ENCODE measurements at regions of chr16 and their contacts with region 1.

Region 1: DNA sequence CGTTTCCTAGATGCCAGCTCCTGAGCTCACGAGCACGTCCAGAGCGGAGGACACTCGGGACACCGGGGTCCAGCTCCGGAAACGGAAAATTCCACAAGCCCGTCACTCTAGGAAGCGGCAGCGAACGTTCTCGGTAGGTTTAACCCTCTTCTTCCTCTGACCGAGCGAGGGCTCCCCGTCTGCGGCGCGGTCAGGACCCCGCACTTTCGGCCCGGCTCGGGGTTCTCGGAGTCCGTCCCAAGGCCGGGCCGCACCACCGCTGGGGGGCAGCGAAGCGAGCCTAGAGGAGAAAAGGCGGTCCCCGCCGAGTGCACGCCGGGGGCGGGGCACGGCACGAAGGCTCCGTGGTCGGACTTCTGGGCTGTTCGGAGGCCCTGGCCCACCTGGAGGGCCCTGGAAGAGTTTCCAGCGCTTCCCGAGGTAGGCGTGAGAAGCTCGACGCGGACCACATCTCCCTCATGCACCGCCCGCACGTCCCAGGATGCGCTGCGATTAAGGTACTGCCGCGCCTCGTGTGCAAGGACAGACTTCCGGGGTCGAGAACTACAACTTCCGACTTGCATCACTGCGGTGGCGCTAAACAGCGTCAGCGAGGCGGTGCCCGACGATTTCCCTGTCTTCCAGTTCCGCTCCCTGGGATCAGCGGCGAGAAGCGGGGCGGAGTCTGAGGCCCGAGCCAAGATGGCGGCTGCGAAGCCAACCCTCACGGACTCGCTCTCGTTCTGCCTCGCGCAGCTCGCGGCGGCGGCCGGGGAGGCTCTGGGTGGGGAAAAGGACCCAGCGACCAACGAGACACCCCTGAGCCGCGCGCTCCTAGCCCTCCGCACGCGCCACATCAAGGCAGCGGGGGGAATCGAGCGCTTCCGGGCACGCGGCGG is at the start of gene ARMC5:
- DNase-seq: peak; percentile 96 to 99 (median 98)

Region 2: DNA sequence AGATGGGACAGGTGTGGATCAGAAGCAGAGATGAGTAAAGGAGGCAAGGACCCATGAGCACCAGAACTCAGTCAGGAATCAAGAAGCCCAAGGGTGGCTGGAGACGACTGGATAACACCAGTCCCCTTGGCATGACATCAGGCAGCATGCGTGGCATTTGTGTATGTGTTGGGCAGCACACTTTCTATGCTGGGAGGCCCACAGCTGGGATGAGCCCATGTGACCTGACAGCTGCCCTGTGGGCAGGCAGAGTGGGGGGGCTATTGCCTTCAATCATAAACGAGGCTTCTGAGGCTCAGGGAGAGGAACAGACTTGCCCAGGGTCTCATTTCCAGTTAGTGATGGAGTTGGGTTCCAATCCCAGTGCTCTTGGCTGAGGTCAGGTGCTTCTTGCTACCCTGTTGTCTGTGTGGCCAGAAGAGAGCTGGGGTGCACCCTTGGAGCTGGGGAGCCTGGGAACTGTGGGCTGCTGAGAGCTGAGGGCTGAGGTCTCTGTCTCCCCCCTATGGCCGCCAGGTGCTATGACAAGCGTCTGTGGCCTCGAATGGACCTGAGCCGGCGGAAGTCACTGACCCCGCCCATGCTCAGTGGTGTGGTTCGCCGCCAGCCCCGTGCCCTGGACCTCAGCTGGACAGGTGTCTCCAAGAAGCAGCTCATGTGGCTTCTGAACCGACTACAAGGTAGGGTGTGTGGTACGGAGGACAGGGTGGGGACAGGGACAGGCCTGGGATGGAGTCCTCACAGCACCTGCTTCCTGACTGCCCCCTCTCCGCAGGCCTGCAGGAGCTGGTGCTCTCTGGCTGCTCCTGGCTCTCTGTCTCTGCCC is 517.3 kb before region 1 on chr16:
- intact Hi-C with region 1: no loop called
- DNase-seq: peak in 41 of 42 donors; percentile 34 to 80 (median 65)

Region 3: DNA sequence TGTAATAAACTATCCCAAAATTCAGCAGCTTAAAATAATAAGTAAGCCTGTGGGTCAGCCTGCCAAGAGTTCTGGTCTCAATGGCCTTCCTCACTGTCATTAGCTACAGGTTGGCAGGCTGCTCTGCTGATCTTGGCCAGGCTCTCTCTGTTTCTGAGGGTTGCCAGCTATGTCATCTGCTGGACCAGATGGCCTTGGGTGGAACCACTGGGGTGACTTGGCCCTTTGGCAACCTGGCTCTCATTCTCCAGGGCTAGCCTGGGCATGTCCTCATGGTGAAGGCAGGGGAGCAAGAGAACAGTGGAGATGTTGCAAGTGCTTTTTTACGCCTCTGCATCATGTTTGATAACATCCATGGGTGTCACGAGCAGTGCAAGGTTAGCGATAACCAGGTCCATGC is 185.4 kb before region 1 on chr16:
- intact Hi-C with region 1: no loop called
- DNase-seq: no peak

Region 4: GRCh38 chr16:31507929-31508705 is 49.0 kb after region 1 on chr16 and contains the start of gene RUSF1:
- intact Hi-C with region 1: loop called (anchors 5 kb)
- DNase-seq: peak; percentile 81 to 97 (median 94)

Region 5: DNA sequence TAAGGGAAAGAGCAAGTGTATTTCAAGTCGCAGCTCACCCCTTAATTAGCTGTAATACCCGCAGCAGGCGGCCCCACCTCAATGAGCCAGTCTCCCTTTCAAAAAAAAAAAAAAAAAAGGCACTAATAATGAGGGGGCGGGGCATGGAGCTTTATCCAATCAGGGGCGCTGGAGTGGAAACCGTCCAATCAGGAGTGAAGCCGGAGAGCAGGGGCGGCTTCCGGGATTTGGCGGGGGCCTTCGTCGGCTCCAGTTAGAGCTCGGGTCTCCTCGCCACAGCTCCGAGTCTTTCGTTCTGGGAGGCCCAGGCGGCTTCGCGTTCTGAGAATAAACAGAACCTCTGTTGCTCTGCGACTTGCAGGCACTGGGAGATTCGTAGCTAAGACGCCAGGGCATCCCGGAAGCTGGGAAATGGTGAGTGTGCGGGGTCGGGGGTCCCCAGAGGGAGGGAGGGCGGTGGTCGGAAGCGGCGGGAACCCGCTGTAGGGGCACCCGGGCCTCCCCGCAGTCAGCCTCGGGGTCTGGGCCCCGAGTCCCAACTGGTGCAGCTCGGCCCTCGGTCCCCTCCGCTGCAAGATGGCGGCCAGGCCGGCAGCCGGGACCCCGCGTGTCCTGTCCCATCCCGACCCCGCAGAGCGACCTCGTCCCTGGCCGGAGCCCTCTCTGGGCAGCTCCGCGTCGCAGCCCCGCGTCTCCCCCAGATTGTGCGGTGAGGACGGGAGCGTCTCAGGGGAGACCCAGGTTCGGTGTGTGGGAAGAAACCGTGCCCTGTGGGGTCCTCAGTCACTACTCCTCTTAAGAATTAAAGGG is 414.7 kb after region 1 on chr16 and contains the start of gene ZNF267:
- intact Hi-C with region 1: loop called (anchors 5 kb)
- DNase-seq: peak; percentile 88 to 98 (median 94)

Measured in head of caudate nucleus (tissue), 42 donors.